Mammary epithelial cell (primary cell): ENCODE measurements at regions of chr9 and their contacts with region 1.

Region 1: GRCh38 chr9:71506821-71507220 is 261.5 kb downstream of the CEMIP2 start:
- DNase-seq: peak; percentile 91
- H3K4me3 ChIP-seq: no peak overlapping the region
- H3K27ac ChIP-seq: peak overlapping the region; percentile 53
- H3K4me1 ChIP-seq: peaks cover 49% of the 10 kb centered on the region
- H3K27me3 ChIP-seq: no peaks in the 10 kb centered on the region
- CTCF ChIP-seq: no peak

Region 2: GRCh38 chr9:71446473-71447411 is 60.1 kb before region 1 on chr9:
- CTCF ChIA-PET with region 1: no interaction called
- dilution Hi-C with region 1: loop called (anchors 5 kb)
- in situ Hi-C with region 1: no loop called
- intact Hi-C with region 1: no loop called
- DNase-seq: peak; percentile 68
- H3K4me3 ChIP-seq: peak overlapping the region; percentile 49 to 57 (median 51)
- H3K27ac ChIP-seq: no peak overlapping the region
- H3K4me1 ChIP-seq: peaks cover 7% of the 10 kb centered on the region
- H3K27me3 ChIP-seq: peaks cover 12% of the 10 kb centered on the region
- CTCF ChIP-seq: peak; percentile 14 to 30

Region 3: DNA sequence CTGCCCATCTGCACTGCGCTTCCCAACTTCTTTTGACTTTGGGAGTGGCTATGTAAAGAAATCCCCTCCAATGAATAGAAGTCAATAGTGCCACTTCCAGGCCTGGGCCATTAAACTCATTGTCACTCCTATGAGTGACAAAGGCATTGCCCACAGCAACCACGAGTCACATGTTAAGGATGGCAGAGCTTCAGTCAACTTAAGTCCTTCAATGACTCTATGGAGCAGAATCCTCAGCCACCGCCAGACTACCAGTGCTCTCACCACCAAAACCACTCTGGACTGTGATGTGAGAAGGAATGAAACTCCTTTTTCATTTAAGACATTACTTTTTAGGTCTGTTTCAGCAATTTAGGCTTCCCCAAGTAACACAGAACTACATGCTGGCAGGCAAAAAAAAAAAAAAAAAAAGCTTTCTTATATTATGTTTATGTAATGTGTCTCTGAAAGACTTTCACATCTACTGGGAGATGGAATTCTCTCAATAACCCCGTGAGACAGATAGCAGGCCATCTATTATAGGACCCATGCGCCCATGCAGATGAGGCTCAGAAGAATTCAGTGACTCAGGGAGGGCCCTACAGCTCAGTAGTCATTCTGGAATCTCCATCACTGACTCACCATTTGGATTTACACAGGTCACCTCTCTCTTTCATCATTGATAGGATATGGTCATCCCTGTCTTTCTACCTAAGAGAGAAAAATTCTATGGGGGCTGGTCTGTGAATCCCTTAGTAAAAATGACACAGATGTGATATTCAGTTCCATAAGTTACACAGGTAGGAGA is 80.9 kb after region 1 on chr9:
- CTCF ChIA-PET with region 1: no interaction called
- dilution Hi-C with region 1: no loop called
- in situ Hi-C with region 1: no loop called
- intact Hi-C with region 1: loop called (anchors 5 kb)
- DNase-seq: peak; percentile 88
- H3K4me3 ChIP-seq: no peak overlapping the region
- H3K27ac ChIP-seq: peak overlapping the region; percentile 23
- H3K4me1 ChIP-seq: peaks cover 4% of the 10 kb centered on the region
- H3K27me3 ChIP-seq: no peaks in the 10 kb centered on the region
- CTCF ChIP-seq: no peak

Region 4: GRCh38 chr9:71683598-71684235 is 176.9 kb after region 1 on chr9:
- CTCF ChIA-PET with region 1: no interaction called
- dilution Hi-C with region 1: no loop called
- in situ Hi-C with region 1: no loop called
- intact Hi-C with region 1: loop called (anchors 5 kb)
- DNase-seq: peak; percentile 83
- H3K4me3 ChIP-seq: no peak overlapping the region
- H3K27ac ChIP-seq: peak overlapping the region; percentile 54
- H3K4me1 ChIP-seq: peaks cover 62% of the 10 kb centered on the region
- H3K27me3 ChIP-seq: no peaks in the 10 kb centered on the region
- CTCF ChIP-seq: peak; percentile 67 to 85

Region 5: GRCh38 chr9:71748280-71748743 is 241.5 kb after region 1 on chr9:
- CTCF ChIA-PET with region 1: no interaction called
- dilution Hi-C with region 1: loop called (anchors 10 kb)
- in situ Hi-C with region 1: no loop called
- intact Hi-C with region 1: no loop called
- DNase-seq: peak; percentile 54
- H3K4me3 ChIP-seq: no peak overlapping the region
- H3K27ac ChIP-seq: no peak overlapping the region
- H3K4me1 ChIP-seq: peaks cover 12% of the 10 kb centered on the region
- H3K27me3 ChIP-seq: no peaks in the 10 kb centered on the region
- CTCF ChIP-seq: no peak

Region 6: GRCh38 chr9:71768388-71769174 is 261.8 kb after region 1 on chr9 and contains the start of gene CEMIP2:
- CTCF ChIA-PET with region 1: no interaction called
- dilution Hi-C with region 1: no loop called
- in situ Hi-C with region 1: no loop called
- intact Hi-C with region 1: loop called (anchors 5 kb)
- DNase-seq: peak; percentile 94
- H3K4me3 ChIP-seq: peak within 1 kb of the TSS; percentile 76 to 86 (median 84)
- H3K27ac ChIP-seq: peak within 1 kb of the TSS; percentile 69
- H3K4me1 ChIP-seq: peaks cover 37% of the 10 kb centered on the region
- H3K27me3 ChIP-seq: no peaks in the 10 kb centered on the region
- CTCF ChIP-seq: peak; percentile 18 to 54
- total RNA-seq, gene CEMIP2: 76.4 to 398 TPM

Region 7: DNA sequence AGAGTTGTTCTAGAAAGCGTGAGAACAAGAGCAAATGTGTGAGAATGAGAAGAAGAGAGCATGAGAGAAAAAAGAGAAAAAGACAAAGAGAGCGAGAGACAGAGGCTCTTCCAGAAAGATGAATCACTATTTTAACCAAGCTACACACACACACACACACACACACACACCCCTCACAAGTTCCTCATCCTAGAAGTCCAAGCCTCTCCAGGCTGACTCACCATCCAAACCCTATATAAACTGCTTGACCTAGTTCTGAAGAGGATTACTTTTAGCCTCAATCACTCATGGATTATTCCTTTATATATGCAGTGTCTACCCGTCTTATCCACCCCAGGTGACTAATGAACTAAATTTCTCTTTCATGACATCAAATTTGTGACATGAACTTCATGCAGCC is 516.0 kb after region 1 on chr9:
- CTCF ChIA-PET with region 1: no interaction called
- dilution Hi-C with region 1: no loop called
- in situ Hi-C with region 1: no loop called
- intact Hi-C with region 1: loop called (anchors 10 kb)
- DNase-seq: peak; percentile 89
- H3K4me3 ChIP-seq: no peak overlapping the region
- H3K27ac ChIP-seq: no peak overlapping the region
- H3K4me1 ChIP-seq: peaks cover 20% of the 10 kb centered on the region
- H3K27me3 ChIP-seq: no peaks in the 10 kb centered on the region
- CTCF ChIP-seq: no peak